GM18951 (cell line): ENCODE measurements at regions of chr19 and their contacts with region 1.

Region 1: GRCh38 chr19:23799321-23799720 is 40.6 kb upstream of the ZNF681 start:
- POLR2A ChIP-seq: no peak

Region 2: DNA sequence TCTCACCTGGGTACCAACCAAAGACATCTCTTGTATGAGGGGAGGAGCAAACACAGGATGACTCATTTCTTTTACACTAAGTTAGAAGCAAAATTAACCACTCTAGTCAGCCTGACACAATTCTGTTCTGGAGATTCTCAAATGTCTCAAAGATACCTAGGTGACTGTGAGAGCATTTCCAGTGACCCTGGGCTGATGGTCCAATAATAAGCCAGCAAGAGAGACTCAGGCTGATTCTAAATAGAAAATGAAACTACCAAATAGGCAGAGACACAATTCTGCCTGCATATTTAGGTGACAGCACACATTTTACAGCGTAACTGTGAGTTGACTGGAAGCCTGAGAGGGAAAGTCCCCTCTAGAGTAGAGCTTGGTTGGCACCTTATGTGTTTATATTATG is 420.4 kb before region 1 on chr19:
- in situ Hi-C with region 1: loop called (anchors 5 kb)
- POLR2A ChIP-seq: no peak